ENCODE measurements at regions of chr15 and their contacts with region 1.

Region 1: GRCh38 chr15:101198800-101199199 is 53.0 kb downstream of the CHSY1 start:
- DNase-seq: no peak
- ATAC-seq: no peak
- H3K4me3 ChIP-seq: no peak overlapping the region
- H3K4me3 Mint-ChIP-seq: no peak overlapping the region
- H3K27ac ChIP-seq: no peak overlapping the region
- H3K27ac Mint-ChIP-seq: no peak overlapping the region
- H3K4me1 ChIP-seq: peaks cover 40 to 46% of the 10 kb centered on the region in 2 donors
- H3K4me1 Mint-ChIP-seq: peaks cover 68% of the 10 kb centered on the region
- H3K27me3 ChIP-seq: no peaks in the 10 kb centered on the region
- H3K27me3 Mint-ChIP-seq: no peaks in the 10 kb centered on the region
- CTCF ChIP-seq: no peak

Region 2: GRCh38 chr15:100934726-100935125 is 264.1 kb before region 1 on chr15:
- CTCF ChIA-PET with region 1: no interaction called
- POLR2A ChIA-PET with region 1: no interaction called
- intact Hi-C with region 1: no loop called
- DNase-seq: peak; percentile 50
- ATAC-seq: peak; percentile 65
- H3K4me3 ChIP-seq: no peak overlapping the region
- H3K4me3 Mint-ChIP-seq: peak overlapping the region; percentile 35
- H3K27ac ChIP-seq: no peak overlapping the region
- H3K27ac Mint-ChIP-seq: peak overlapping the region; percentile 73
- H3K4me1 ChIP-seq: peaks cover 50 to 51% of the 10 kb centered on the region in 2 donors
- H3K4me1 Mint-ChIP-seq: peaks cover 52% of the 10 kb centered on the region
- H3K27me3 ChIP-seq: no peaks in the 10 kb centered on the region
- H3K27me3 Mint-ChIP-seq: no peaks in the 10 kb centered on the region
- CTCF ChIP-seq: no peak

Region 3: GRCh38 chr15:101232677-101233076 is 33.9 kb after region 1 on chr15:
- CTCF ChIA-PET with region 1: no interaction called
- POLR2A ChIA-PET with region 1: no interaction called
- intact Hi-C with region 1: loop called (anchors 5 kb)
- DNase-seq: no peak
- ATAC-seq: no peak
- H3K4me3 ChIP-seq: no peak overlapping the region
- H3K4me3 Mint-ChIP-seq: no peak overlapping the region
- H3K27ac ChIP-seq: no peak overlapping the region
- H3K27ac Mint-ChIP-seq: no peak overlapping the region
- H3K4me1 ChIP-seq: no peaks in the 10 kb centered on the region
- H3K4me1 Mint-ChIP-seq: peaks cover 9% of the 10 kb centered on the region
- H3K27me3 ChIP-seq: no peaks in the 10 kb centered on the region
- H3K27me3 Mint-ChIP-seq: no peaks in the 10 kb centered on the region
- CTCF ChIP-seq: no peak

Region 4: GRCh38 chr15:101318839-101319238 is 120.0 kb after region 1 on chr15:
- CTCF ChIA-PET with region 1: no interaction called
- POLR2A ChIA-PET with region 1: no interaction called
- intact Hi-C with region 1: no loop called
- DNase-seq: no peak
- ATAC-seq: no peak
- H3K4me3 ChIP-seq: no peak overlapping the region
- H3K4me3 Mint-ChIP-seq: no peak overlapping the region
- H3K27ac ChIP-seq: no peak overlapping the region
- H3K27ac Mint-ChIP-seq: no peak overlapping the region
- H3K4me1 ChIP-seq: peaks cover 7 to 9% of the 10 kb centered on the region in 2 donors
- H3K4me1 Mint-ChIP-seq: peaks cover 6% of the 10 kb centered on the region
- H3K27me3 ChIP-seq: peaks cover 0 to 32% (median 11%) of the 10 kb centered on the region in 4 experiments
- H3K27me3 Mint-ChIP-seq: peaks cover 49% of the 10 kb centered on the region
- CTCF ChIP-seq: no peak

Measured in B cell (primary cell).